ENCODE measurements at regions of chr13 and their contacts with region 1.

Region 1: DNA sequence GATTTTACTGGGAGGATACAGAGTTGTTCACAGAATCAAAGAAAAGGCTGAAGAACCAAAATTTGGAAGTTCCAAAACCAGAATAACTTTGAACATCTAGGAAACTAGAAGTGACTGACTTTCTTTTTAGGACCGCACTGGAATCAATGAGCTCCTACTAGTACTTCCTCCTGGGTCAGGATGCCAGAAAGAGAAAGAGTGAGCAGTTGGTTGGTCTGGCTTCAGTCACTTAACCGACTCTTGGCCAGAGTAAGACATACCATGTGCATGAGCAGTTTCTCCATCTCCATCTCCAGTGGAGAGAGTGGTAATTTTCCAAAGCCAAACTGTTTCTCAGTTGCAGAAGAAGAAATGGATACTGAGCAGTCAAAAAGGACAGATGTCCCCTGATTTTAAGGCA is 27.1 kb upstream of the MTUS2 start:
- DNase-seq: peak; percentile 34
- H3K4me3 ChIP-seq: no peak overlapping the region
- H3K27ac ChIP-seq: no peak overlapping the region
- H3K27me3 ChIP-seq: peaks cover 17% of the 10 kb centered on the region
- CTCF ChIP-seq: no peak

Region 2: DNA sequence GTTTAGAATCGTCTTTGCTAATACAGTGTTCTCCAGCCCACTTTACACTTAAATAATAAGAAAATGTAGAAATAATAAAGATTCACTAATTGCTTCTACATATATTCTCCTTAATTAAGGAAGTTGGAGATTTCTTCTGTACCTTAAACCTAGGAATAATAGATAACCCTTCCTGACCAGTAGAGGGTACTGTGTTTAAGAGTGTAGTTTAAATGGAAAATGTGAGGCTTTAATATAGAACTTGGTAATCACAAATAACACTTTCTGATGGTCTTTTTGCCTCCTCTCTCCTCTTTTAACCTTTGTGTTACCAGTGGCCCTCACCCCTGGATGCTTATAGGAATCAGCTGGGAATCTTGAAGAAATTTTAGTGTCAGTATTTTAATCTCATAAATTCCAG is 113.4 kb before region 1 on chr13:
- CTCF ChIA-PET with region 1: interaction called, 42 read pairs
- POLR2A ChIA-PET with region 1: interaction called, 3 read pairs
- DNase-seq: no peak
- H3K4me3 ChIP-seq: no peak overlapping the region
- H3K27ac ChIP-seq: no peak overlapping the region
- H3K27me3 ChIP-seq: no peaks in the 10 kb centered on the region
- CTCF ChIP-seq: peak; percentile 51

Region 3: GRCh38 chr13:28697441-28697840 is 95.6 kb before region 1 on chr13:
- CTCF ChIA-PET with region 1: interaction called, 11 read pairs
- POLR2A ChIA-PET with region 1: no interaction called
- DNase-seq: no peak
- H3K4me3 ChIP-seq: no peak overlapping the region
- H3K27ac ChIP-seq: no peak overlapping the region
- H3K27me3 ChIP-seq: no peaks in the 10 kb centered on the region
- CTCF ChIP-seq: no peak

Measured in AG04450 (cell line).